ENCODE measurements at regions of chr6 and their contacts with region 1.

Region 1: GRCh38 chr6:133184798-133185372 is 56.3 kb upstream of the EYA4 start:
- DNase-seq: no peak

Region 2: GRCh38 chr6:131755597-131755996 is 1429.3 kb before region 1 on chr6:
- intact Hi-C with region 1: loop called in 1 of 2 experiments (anchors 10 kb)
- DNase-seq: no peak

Region 3: GRCh38 chr6:133512410-133513016 is 327.6 kb after region 1 on chr6:
- intact Hi-C with region 1: loop called in 1 of 2 experiments (anchors 10 kb)
- DNase-seq: peak; percentile 76